Dorsolateral prefrontal cortex (tissue), 120 donors: ENCODE measurements at regions of chr18 and their contacts with region 1.

Region 1: DNA sequence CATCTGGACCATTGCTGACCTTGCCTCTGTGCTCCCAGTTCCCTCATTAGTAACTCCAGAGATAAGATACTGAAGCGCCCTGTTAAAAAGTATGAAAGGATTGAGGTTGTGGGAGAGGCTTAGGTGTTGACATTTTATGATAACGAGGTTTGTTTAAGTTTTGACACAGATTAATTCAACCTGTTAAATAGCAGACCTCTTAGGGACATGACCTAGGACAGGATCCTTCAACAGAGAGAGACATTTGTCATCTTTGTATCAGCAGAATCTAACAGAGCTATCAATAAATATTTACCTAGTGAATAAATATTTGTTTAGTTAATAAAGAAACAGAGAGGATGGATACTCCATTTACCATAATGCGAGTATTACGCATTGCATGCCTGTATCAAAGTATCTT is 99.5 kb downstream of the DCC start:
- DNase-seq: no peak
- H3K4me3 ChIP-seq: no peak overlapping the region
- H3K27ac ChIP-seq: no peak overlapping the region
- H3K27me3 ChIP-seq: peaks cover 0 to 2% (median 0%) of the 10 kb centered on the region in 45 donors
- CTCF ChIP-seq: no peak

Region 2: GRCh38 chr18:52376104-52376503 is 63.4 kb before region 1 on chr18:
- intact Hi-C with region 1: loop called in 1 of 2 experiments (anchors 10 kb)
- DNase-seq: no peak
- H3K4me3 ChIP-seq: no peak overlapping the region
- H3K27ac ChIP-seq: no peak overlapping the region
- H3K27me3 ChIP-seq: no peaks in the 10 kb centered on the region
- CTCF ChIP-seq: no peak